GM10248 (cell line): ENCODE measurements at regions of chr5 and their contacts with region 1.

Region 1: DNA sequence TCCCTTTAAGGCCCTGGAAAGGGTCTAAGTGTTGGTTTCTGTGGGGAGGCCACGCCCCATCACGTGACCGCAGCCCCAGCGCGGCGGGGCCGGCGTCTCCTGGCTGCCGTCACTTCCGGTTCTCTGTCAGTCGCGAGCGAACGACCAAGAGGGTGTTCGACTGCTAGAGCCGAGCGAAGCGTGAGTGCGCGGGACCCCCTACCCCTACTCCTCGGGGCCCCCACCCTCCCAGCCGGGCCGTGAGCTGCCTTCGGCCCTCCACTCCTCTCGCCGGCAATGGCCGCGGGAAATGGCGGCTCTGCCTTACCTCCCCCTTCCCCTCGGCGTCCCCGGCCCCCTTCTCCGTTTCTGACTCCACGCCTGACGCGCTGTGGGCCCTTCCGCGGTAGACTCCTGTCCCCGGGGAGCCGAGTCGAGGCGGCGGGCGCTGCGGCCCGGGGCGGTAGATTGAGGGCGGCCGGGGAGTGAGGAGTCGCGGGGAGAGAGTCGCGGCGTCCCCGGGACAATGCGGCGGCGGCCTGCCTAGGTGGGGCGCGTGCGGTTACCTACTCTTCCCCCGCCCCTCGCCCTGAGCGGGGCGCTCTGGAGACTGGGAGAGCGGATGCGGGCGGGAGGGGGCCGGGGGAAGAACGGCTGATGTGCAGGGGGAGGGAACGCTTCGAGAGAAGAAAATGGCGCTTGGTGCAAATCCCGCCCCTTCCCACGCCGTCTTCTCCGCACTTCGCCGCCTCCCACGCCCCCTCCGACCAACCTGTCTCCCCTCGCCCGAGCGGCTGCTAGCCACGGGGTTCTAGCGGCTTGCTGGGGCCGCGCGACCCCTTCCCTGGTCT is at the start of gene SUB1:
- DNase-seq: peak; percentile 90
- CTCF ChIP-seq: no peak

Region 2: DNA sequence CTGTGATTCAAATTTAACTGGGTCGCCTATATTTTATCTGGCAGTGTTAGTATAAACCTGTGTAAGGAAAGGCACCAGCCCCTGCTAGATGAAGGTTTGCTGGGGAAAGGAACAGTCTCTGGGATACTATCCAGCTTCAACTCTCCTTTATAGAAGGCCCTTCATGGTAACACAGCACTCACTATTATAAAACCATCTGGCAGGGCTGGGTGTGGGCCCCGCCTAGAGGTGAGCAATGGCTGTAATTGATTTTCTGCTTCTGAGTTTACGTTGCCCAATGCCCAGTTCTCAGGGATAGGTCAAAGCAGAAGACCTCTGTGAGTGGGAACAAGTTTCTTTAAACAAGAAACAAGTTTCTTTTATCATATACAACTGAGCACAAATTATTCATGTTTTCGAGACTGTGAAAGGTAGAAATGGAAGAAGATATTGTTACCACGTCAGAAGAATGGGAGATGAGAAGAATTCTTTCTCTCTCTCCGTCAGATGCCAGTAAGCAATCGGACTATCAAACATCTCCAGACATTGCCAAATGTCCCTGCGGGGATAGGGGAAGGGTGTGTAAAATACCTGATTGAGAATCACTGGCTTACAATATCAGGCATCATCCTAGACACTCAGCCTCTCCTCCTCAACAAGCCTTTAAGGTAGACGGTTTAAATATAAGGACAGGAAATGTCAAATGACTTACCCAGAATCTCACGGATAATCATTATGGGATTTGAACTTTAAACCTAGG is 740.9 kb before region 1 on chr5:
- CTCF ChIA-PET with region 1: no interaction called
- POLR2A ChIA-PET with region 1: no interaction called
- DNase-seq: no peak
- CTCF ChIP-seq: no peak

Region 3: DNA sequence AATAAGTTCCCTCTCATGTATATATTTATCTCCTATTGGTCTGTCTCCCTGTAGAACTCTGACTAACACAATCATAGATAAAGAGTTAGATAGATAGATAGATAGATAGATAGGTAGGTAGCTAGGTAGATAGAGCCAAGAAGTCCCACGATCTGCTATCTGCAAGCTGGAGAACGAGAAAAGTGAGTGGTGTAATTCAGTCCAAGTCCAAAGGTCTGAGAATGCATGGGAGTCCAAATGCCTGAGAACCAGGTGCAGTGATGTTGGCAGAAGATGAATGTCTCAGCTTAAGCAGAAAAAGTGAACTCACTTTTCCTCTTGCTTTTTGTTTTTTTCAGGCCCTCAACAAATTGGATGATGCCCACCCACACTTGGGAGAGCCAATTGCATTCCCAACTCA is 103.5 kb before region 1 on chr5:
- CTCF ChIA-PET with region 1: interaction called, 191 read pairs
- POLR2A ChIA-PET with region 1: no interaction called
- DNase-seq: no peak
- CTCF ChIP-seq: no peak

Region 4: GRCh38 chr5:32504989-32505596 is 80.6 kb before region 1 on chr5:
- CTCF ChIA-PET with region 1: interaction called, 17 read pairs
- POLR2A ChIA-PET with region 1: no interaction called
- DNase-seq: no peak
- CTCF ChIP-seq: no peak

Region 5: DNA sequence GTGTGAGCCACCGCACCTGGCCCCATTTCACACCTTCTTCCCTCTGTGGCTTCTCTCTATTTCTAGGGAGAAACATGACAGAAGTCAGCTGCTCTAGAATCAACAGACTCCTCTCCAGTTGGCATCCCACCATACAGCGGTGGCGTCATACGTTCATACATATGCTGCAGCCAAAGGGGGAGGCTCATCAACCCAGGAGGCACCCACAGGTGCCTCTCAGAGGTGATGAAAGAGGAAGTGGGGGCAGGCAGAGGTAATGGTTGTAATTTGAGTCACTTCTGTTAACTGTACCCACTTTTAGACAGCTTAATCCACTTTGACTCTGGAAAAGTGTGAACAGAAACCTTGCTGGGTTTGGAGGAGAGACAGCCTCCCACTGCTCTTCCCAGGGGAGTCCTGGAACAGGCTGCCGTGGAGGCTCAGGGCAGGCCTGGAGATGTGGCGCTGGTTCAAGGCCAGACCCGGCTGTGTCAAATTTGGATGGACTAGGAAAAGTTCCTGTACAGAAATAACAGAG is 47.6 kb before region 1 on chr5:
- CTCF ChIA-PET with region 1: interaction called, 27 read pairs
- POLR2A ChIA-PET with region 1: interaction called, 5 read pairs
- DNase-seq: peak; percentile 70
- CTCF ChIP-seq: no peak

Region 6: GRCh38 chr5:32600057-32600622 is 14.5 kb after region 1 on chr5:
- CTCF ChIA-PET with region 1: interaction called, 21 read pairs
- POLR2A ChIA-PET with region 1: interaction called, 3 read pairs
- DNase-seq: no peak
- CTCF ChIP-seq: no peak

Region 7: GRCh38 chr5:32621256-32621655 is 35.6 kb after region 1 on chr5:
- CTCF ChIA-PET with region 1: no interaction called
- POLR2A ChIA-PET with region 1: no interaction called
- DNase-seq: no peak
- CTCF ChIP-seq: no peak